ENCODE measurements at regions of chrX and their contacts with region 1.

Region 1: GRCh38 chrX:18886344-18887161 is 97.4 kb downstream of the PHKA2 start:
- DNase-seq: peak; percentile 77 to 88 (median 83)
- ATAC-seq: peak; percentile 71 to 82 (median 76)
- H3K4me3 ChIP-seq: peak overlapping the region in 11 of 12 donors; percentile 10 to 60 (median 46)
- H3K27ac ChIP-seq: peak overlapping the region; percentile 80 to 96 (median 88)
- H3K4me1 ChIP-seq: peaks cover 0 to 42% (median 16%) of the 10 kb centered on the region in 12 donors
- H3K27me3 ChIP-seq: no peaks in the 10 kb centered on the region
- CTCF ChIP-seq: peak; percentile 24 to 62 (median 48)
- POLR2A ChIP-seq: peak in 1 of 2 donors; percentile 27

Region 2: GRCh38 chrX:18596096-18596495 is 290.5 kb before region 1 on chrX:
- intact Hi-C with region 1: loop called in 2 of 10 experiments (anchors 10 kb)
- DNase-seq: no peak
- ATAC-seq: peak; percentile 57 to 85 (median 72)
- H3K4me3 ChIP-seq: no peak overlapping the region
- H3K27ac ChIP-seq: no peak overlapping the region
- H3K4me1 ChIP-seq: no peaks in the 10 kb centered on the region
- H3K27me3 ChIP-seq: no peaks in the 10 kb centered on the region
- CTCF ChIP-seq: no peak
- POLR2A ChIP-seq: no peak

Region 3: DNA sequence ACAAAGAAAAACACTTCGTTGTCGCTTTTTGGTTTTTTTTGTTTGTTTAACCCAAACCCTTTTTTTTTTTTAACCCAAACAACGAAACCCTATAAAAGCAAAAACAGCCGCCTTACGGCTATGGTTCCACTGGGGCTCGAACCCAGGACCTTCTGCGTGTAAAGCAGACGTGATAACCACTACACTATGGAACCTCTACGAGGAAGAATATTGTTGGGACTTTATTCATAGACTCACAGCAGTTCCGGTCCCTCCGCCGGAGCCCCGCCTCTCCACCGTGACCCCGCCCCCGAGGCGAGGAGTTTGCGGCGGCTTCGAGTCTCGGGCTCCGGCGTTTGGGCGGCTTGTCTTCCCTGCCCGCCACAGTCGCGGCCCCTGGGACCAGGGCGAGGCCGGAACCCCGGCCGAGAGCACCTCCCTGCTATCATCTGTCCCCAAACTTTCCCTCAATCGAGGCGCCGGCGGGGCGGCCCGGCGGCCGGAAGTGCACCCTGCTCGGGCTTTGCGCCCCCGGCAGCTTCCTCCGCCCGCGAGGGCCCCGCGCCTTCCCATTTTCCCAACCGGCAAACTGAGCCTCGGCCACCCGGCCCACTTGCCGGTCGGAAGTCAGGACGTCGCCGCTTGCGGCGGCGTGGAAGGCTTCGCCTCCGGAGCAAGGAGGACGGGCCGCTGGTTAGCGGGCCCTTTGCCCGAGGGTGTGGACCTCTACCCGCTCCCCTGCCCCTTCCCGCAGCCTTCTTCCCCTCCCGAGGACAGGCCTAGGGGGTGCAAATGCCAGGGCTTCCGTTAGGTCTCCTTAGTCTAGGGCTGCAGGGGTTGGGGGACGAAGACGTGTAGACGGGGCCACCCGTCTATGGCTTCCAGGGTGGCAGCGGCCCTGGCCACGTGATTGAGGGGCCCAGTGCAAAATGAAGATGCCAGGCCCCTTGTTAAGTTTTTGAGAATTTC is 211.5 kb before region 1 on chrX:
- intact Hi-C with region 1: loop called in 8 of 10 experiments (anchors 2 to 10 kb)
- DNase-seq: peak; percentile 74 to 89 (median 78)
- ATAC-seq: peak; percentile 92 to 96 (median 93)
- H3K4me3 ChIP-seq: peak overlapping the region; percentile 36 to 93 (median 69)
- H3K27ac ChIP-seq: peak overlapping the region in 11 of 12 donors; percentile 76 to 92 (median 85)
- H3K4me1 ChIP-seq: no peaks in the 10 kb centered on the region
- H3K27me3 ChIP-seq: peaks cover 0 to 4% (median 0%) of the 10 kb centered on the region in 9 donors
- CTCF ChIP-seq: no peak
- POLR2A ChIP-seq: peak in 1 of 2 donors; percentile 34

Region 4: DNA sequence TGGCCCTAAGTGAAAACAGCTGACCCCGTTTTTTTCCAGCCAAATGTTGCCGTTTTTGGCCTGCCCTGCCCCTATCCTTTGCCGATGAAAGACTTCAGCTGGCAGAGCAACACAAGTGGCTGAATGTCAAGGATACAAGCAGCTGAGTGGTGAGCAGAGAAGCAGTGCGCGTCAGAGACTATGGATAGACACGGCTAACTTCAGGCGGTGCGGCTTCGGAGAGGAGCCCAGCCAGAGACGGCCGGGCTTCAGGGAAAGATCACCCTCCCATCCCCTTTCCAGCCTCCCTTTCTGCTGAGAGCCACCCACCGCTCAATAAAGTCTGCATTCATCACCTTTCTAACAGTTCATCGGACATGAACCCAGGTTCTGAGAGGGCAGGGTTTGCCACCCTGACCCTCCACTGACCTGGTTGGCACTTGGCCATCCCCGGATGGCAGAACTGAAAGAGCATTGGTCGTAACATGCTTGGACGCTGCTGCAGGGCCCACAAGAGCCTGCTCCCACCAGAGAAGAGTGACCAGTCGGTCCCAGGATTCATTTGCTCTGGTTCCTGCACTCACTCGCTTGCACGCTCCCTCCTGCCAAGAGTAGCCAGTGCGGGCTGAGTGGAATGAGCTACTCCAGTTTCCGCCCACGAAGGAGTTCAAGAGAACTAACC is 53.4 kb before region 1 on chrX:
- intact Hi-C with region 1: no loop called
- DNase-seq: peak; percentile 28 to 70 (median 53)
- ATAC-seq: peak; percentile 85 to 97 (median 94)
- H3K4me3 ChIP-seq: peak overlapping the region in 7 of 12 donors; percentile 15 to 43 (median 30)
- H3K27ac ChIP-seq: peak overlapping the region; percentile 11 to 81 (median 63)
- H3K4me1 ChIP-seq: no peaks in the 10 kb centered on the region
- H3K27me3 ChIP-seq: peaks cover 0 to 4% (median 0%) of the 10 kb centered on the region in 9 donors
- CTCF ChIP-seq: no peak
- POLR2A ChIP-seq: no peak

Region 5: GRCh38 chrX:18873189-18873791 is 13.3 kb before region 1 on chrX:
- intact Hi-C with region 1: loop called in 1 of 10 experiments (anchors 2 kb)
- DNase-seq: peak in 4 of 5 donors; percentile 15 to 67 (median 54)
- ATAC-seq: peak; percentile 83 to 92 (median 90)
- H3K4me3 ChIP-seq: peak overlapping the region in 3 of 12 donors; percentile 3 to 12 (median 12)
- H3K27ac ChIP-seq: peak overlapping the region; percentile 47 to 84 (median 75)
- H3K4me1 ChIP-seq: peaks cover 0 to 25% (median 10%) of the 10 kb centered on the region in 12 donors
- H3K27me3 ChIP-seq: no peaks in the 10 kb centered on the region
- CTCF ChIP-seq: no peak
- POLR2A ChIP-seq: no peak

Measured in heart left ventricle (tissue), 16 donors.